ENCODE measurements at regions of chr7 and their contacts with region 1.

Region 1: DNA sequence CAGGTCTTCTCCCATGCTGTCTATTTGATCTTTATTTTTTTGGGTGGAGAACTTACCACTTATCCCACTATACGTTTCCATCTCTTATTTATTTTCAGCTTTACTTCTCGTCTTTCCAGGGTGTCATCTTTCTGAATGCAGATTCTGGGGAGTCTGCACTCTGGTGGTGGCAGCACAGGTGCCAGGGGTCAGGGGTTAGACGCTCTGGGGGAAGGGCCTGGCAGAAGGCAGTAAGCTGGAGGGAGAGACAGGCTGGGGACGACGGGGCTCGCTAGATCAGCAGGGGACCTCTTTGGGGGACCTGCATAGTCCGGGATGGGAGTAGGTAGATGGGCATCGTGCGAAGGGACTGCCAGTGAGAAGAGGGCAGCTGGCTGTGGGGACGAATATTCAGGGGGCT is 22.3 kb downstream of the CHST12 start:
- DNase-seq: no peak
- H3K4me3 ChIP-seq: no peak overlapping the region
- H3K27ac ChIP-seq: no peak overlapping the region
- H3K4me1 ChIP-seq: no peaks in the 10 kb centered on the region
- H3K27me3 ChIP-seq: no peaks in the 10 kb centered on the region
- CTCF ChIP-seq: no peak

Region 2: DNA sequence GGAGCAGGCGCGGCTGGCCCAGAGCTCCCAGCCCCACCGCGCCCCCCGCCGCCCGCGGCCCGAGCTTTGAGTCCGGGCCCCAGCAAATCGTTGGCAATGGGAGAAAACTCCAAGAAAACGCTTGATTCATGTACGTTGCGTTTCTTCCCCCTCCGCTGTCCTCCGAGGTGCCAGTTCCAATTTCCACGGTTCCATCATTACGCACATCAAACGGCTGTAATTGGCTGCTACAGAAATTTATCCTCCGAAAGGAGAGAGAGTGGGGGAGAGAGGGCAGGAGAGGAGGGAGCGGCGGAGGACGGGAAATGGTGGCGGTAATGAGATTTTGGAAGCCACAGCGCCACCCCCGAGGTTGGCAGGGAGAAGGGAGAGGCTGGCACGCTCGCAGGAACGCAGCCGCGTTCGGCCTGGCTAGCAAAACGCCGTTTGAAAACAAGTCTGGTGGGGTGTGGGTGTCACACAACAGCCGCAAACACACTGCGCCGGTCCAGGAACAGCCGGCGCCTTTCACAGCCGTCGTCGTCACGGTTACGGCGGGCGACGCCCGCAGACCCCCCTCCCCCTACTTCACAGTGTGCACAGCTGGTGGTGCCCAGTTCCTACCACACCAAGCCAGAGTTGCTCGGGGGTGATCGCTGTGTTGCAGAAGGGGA is 1135.6 kb before region 1 on chr7:
- intact Hi-C with region 1: no loop called
- DNase-seq: no peak
- H3K4me3 ChIP-seq: peak overlapping the region; percentile 38 to 65
- H3K27ac ChIP-seq: no peak overlapping the region
- H3K4me1 ChIP-seq: peaks cover 0 to 3% of the 10 kb centered on the region in 2 donors
- H3K27me3 ChIP-seq: peaks cover 4% of the 10 kb centered on the region
- CTCF ChIP-seq: peak in 1 of 3 experiments; percentile 27

Region 3: GRCh38 chr7:2321020-2321419 is 104.7 kb before region 1 on chr7:
- intact Hi-C with region 1: no loop called
- DNase-seq: no peak
- H3K4me3 ChIP-seq: no peak overlapping the region
- H3K27ac ChIP-seq: no peak overlapping the region
- H3K4me1 ChIP-seq: no peaks in the 10 kb centered on the region
- H3K27me3 ChIP-seq: no peaks in the 10 kb centered on the region
- CTCF ChIP-seq: no peak

Region 4: GRCh38 chr7:2379821-2380450 is 45.8 kb before region 1 on chr7:
- intact Hi-C with region 1: loop called (anchors 5 kb)
- DNase-seq: no peak
- H3K4me3 ChIP-seq: no peak overlapping the region
- H3K27ac ChIP-seq: no peak overlapping the region
- H3K4me1 ChIP-seq: no peaks in the 10 kb centered on the region
- H3K27me3 ChIP-seq: no peaks in the 10 kb centered on the region
- CTCF ChIP-seq: no peak